ENCODE measurements at regions of chr2 and their contacts with region 1.

Region 1: DNA sequence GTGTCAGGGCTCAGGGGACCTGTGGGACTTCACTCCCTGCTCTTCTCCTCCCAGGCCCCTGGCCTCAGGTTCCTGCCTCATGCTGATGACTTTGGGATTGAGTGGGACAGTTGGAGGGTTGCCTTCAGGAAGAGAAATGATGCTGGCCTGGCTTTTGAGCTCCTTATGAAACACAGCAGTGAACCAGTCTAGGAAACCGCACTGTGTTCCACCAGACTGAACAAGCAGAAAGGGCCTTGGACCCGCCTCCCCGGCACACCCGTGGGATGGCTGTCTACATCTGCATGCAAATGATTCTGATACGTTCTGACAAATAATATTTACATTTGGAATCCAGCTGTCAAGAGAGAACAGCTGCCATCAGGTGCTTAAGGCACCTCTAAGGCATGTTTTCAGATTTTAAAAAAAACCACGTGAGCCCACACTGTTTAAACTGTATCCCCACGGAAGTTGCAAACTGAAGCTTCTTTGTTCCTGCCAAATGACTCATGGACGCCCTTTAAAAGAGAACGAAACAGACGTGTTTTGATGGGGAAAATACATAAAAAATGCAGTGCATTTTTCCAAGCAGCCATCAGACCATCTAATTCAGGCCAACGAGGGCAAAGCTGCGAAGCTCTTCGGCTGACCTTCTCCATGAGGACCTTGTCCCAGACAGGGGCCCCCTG is 27.6 kb upstream of the ASAP2 start:
- DNase-seq: peak; percentile 51 to 69
- H3K4me3 ChIP-seq: no peak overlapping the region
- H3K4me3 Mint-ChIP-seq: peak overlapping the region; percentile 72
- H3K27ac Mint-ChIP-seq: peak overlapping the region; percentile 99
- H3K4me1 ChIP-seq: peaks cover 44% of the 10 kb centered on the region
- H3K4me1 Mint-ChIP-seq: peaks cover 44% of the 10 kb centered on the region
- H3K27me3 ChIP-seq: no peaks in the 10 kb centered on the region
- H3K27me3 Mint-ChIP-seq: no peaks in the 10 kb centered on the region
- CTCF ChIP-seq: no peak

Region 2: DNA sequence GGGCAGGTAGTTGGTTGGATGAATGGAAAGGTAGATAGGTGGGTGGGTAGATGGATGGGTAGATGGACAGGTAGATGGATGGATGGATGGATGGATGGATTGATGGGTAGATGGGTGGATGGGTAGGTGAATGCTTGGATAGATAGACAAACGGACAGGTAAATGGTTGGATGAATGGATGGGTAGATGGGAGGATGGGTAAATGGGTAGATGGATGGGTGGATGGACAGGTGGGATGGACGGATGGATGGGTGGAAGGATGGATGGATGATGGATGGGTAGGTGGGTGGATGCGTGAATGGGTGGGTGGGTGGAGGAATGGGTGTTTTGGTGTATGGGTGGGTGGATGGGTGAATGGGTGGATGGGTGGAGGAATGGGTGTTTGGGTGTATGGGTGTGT is 22.6 kb before region 1 on chr2:
- CTCF ChIA-PET with region 1: interaction called, 10 read pairs
- POLR2A ChIA-PET with region 1: no interaction called
- intact Hi-C with region 1: no loop called
- DNase-seq: no peak
- H3K4me3 ChIP-seq: no peak overlapping the region
- H3K4me3 Mint-ChIP-seq: no peak overlapping the region
- H3K27ac Mint-ChIP-seq: no peak overlapping the region
- H3K4me1 ChIP-seq: no peaks in the 10 kb centered on the region
- H3K4me1 Mint-ChIP-seq: no peaks in the 10 kb centered on the region
- H3K27me3 ChIP-seq: no peaks in the 10 kb centered on the region
- H3K27me3 Mint-ChIP-seq: no peaks in the 10 kb centered on the region
- CTCF ChIP-seq: no peak

Region 3: DNA sequence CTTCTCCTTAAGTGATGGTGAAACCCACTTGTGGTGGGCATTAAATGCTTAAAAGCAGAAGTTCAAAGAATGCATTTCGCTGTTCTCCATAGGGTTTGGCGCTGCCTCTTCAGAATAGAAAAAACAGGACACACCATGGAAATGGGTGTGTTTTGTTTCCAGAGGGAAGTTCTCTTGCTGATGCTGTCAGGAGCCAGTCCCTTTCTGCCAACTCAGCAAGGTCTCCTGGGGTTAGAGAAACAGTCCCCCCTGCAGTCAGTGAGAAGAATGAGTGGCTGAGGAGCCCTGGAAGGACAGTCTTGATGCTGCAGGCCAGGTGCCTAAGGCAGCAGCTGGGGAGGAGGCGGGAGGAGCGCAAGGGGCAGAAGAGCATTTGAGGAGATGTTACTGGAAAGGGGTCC is 10.2 kb before region 1 on chr2:
- CTCF ChIA-PET with region 1: interaction called, 9 read pairs
- POLR2A ChIA-PET with region 1: interaction called, 3 read pairs
- intact Hi-C with region 1: loop called (anchors 1 kb)
- DNase-seq: peak in 1 of 2 experiments; percentile 18
- H3K4me3 ChIP-seq: no peak overlapping the region
- H3K4me3 Mint-ChIP-seq: peak overlapping the region; percentile 10
- H3K27ac Mint-ChIP-seq: no peak overlapping the region
- H3K4me1 ChIP-seq: peaks cover 55% of the 10 kb centered on the region
- H3K4me1 Mint-ChIP-seq: peaks cover 59% of the 10 kb centered on the region
- H3K27me3 ChIP-seq: no peaks in the 10 kb centered on the region
- H3K27me3 Mint-ChIP-seq: no peaks in the 10 kb centered on the region
- CTCF ChIP-seq: no peak

Region 4: GRCh38 chr2:9234680-9235387 is 55.8 kb after region 1 on chr2:
- CTCF ChIA-PET with region 1: no interaction called
- POLR2A ChIA-PET with region 1: no interaction called
- intact Hi-C with region 1: loop called (anchors 1 kb)
- DNase-seq: peak; percentile 47 to 74
- H3K4me3 ChIP-seq: no peak overlapping the region
- H3K4me3 Mint-ChIP-seq: peak overlapping the region; percentile 38
- H3K27ac Mint-ChIP-seq: peak overlapping the region; percentile 90
- H3K4me1 ChIP-seq: peaks cover 38% of the 10 kb centered on the region
- H3K4me1 Mint-ChIP-seq: peaks cover 35% of the 10 kb centered on the region
- H3K27me3 ChIP-seq: no peaks in the 10 kb centered on the region
- H3K27me3 Mint-ChIP-seq: no peaks in the 10 kb centered on the region
- CTCF ChIP-seq: no peak

Region 5: DNA sequence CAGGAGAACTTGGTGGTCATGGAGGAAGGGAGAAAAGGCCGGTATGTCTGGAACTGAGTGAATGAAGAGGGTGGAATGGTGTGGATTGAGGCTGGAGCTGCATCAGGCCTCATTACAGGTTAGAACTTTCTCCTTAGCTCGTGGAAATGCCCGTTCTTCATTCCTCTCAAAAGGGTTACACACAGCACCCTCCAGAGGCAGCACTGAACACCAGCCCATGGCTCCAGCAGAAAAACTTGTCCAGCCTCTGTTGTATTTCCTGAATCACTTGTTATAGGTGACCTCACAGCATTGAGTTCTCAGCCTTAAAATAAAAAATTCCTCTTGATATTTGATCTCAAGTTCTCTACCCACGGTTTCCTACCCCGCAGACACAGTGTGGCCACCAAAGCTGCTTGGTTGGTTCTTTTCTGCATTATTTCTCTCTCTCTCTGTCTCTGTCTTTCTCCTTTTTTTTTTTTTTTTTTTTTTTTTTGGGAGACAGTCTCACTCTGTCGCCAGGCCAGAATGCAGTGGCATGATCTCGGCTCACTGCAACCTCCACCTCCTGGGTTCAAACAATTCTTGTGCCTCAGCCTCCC is 154.6 kb after region 1 on chr2:
- CTCF ChIA-PET with region 1: no interaction called
- POLR2A ChIA-PET with region 1: no interaction called
- intact Hi-C with region 1: loop called (anchors 1 kb)
- DNase-seq: peak; percentile 69 to 73
- H3K4me3 ChIP-seq: no peak overlapping the region
- H3K4me3 Mint-ChIP-seq: no peak overlapping the region
- H3K27ac Mint-ChIP-seq: no peak overlapping the region
- H3K4me1 ChIP-seq: no peaks in the 10 kb centered on the region
- H3K4me1 Mint-ChIP-seq: peaks cover 26% of the 10 kb centered on the region
- H3K27me3 ChIP-seq: no peaks in the 10 kb centered on the region
- H3K27me3 Mint-ChIP-seq: no peaks in the 10 kb centered on the region
- CTCF ChIP-seq: peak; percentile 55 to 86